CD4-positive, alpha-beta T cell (primary cell): ENCODE measurements at regions of chr10 and their contacts with region 1.

Region 1: GRCh38 chr10:98134431-98135221 is at the start of gene R3HCC1L:
- DNase-seq: peak; percentile 84 to 96 (median 92)
- ATAC-seq: peak; percentile 94
- H3K4me3 ChIP-seq: peak within 1 kb of the TSS; percentile 96
- H3K4me3 Mint-ChIP-seq: peak within 1 kb of the TSS; percentile 86
- H3K27ac ChIP-seq: peak within 1 kb of the TSS; percentile 87 to 97
- H3K27ac Mint-ChIP-seq: peak within 1 kb of the TSS; percentile 96
- H3K4me1 ChIP-seq: peaks cover 35% of the 10 kb centered on the region
- H3K4me1 Mint-ChIP-seq: peaks cover 48% of the 10 kb centered on the region
- H3K27me3 ChIP-seq: no peaks in the 10 kb centered on the region
- H3K27me3 Mint-ChIP-seq: no peaks in the 10 kb centered on the region
- CTCF ChIP-seq: no peak
- total RNA-seq, gene R3HCC1L: 12.7 to 13.7 TPM

Region 2: DNA sequence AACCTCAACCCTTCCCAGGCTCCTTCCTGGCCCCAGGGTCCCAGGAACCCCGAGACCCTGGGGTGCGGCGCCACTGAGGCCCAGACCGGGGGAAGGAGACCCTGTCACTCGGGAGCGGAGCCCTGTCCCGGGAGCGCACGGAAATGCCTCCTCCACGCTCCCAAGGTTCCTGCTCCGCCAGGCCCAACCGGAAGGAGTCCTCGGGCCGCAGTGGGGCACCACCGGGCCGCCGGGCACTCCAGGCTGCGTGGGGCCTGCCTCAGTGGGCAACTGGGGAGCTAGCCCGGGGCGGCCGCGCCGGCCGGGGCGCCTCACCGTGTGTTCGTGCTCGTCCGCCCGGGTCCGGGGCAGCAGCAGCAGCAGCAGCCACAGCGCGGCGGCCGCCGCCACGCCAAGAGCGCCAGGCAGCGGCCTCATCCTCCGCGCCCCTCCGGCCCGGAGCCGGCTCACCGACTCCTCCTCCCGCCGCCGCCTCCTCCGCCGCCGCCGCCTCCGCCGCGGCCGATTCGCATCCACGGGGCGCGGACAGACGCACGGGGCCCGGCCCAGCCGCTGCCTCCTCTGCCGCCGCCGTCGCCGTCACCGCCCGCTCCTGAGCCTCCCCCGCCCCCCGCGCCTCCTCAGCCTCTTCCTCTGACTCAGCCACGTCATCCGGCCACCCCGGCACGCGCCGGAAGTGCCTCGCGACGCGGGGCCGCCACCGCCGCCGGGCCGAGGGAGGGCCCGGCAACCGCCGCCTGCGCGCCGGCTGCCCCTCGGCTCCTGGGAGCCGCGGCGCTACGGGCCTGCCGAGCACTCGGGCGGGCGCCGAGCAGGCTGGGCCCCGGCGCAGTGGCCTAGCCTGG is 1548.0 kb before region 1 on chr10 and contains the start of gene TM9SF3:
- CTCF ChIA-PET with region 1: no interaction called
- POLR2A ChIA-PET with region 1: no interaction called
- intact Hi-C with region 1: loop called in 1 of 2 experiments (anchors 10 kb)
- DNase-seq: peak; percentile 85 to 97 (median 92)
- ATAC-seq: peak; percentile 81
- H3K4me3 ChIP-seq: peak within 1 kb of the TSS; percentile 95
- H3K4me3 Mint-ChIP-seq: peak within 1 kb of the TSS; percentile 95
- H3K27ac ChIP-seq: peak within 1 kb of the TSS; percentile 96 to 98
- H3K27ac Mint-ChIP-seq: no peak within 1 kb of the TSS
- H3K4me1 ChIP-seq: peaks cover 34% of the 10 kb centered on the region
- H3K4me1 Mint-ChIP-seq: peaks cover 44% of the 10 kb centered on the region
- H3K27me3 ChIP-seq: no peaks in the 10 kb centered on the region
- H3K27me3 Mint-ChIP-seq: no peaks in the 10 kb centered on the region
- CTCF ChIP-seq: no peak
- total RNA-seq, gene TM9SF3: 92.4 to 92.7 TPM

Region 3: GRCh38 chr10:97292097-97292862 is 842.3 kb before region 1 on chr10 and contains the start of gene ARHGAP19:
- CTCF ChIA-PET with region 1: no interaction called
- POLR2A ChIA-PET with region 1: no interaction called
- intact Hi-C with region 1: loop called in 1 of 2 experiments (anchors 10 kb)
- DNase-seq: peak; percentile 86 to 97 (median 90)
- ATAC-seq: peak; percentile 99
- H3K4me3 ChIP-seq: peak within 1 kb of the TSS; percentile 72
- H3K4me3 Mint-ChIP-seq: peak within 1 kb of the TSS; percentile 95
- H3K27ac ChIP-seq: peak within 1 kb of the TSS; percentile 49 to 65
- H3K27ac Mint-ChIP-seq: peak within 1 kb of the TSS; percentile 50
- H3K4me1 ChIP-seq: peaks cover 13% of the 10 kb centered on the region
- H3K4me1 Mint-ChIP-seq: peaks cover 18% of the 10 kb centered on the region
- H3K27me3 ChIP-seq: no peaks in the 10 kb centered on the region
- H3K27me3 Mint-ChIP-seq: no peaks in the 10 kb centered on the region
- CTCF ChIP-seq: no peak
- total RNA-seq, gene ARHGAP19: 6.9 to 8.8 TPM

Region 4: GRCh38 chr10:97640174-97640867 is 494.3 kb before region 1 on chr10 and contains the start of gene PI4K2A:
- CTCF ChIA-PET with region 1: no interaction called
- POLR2A ChIA-PET with region 1: no interaction called
- intact Hi-C with region 1: loop called in 1 of 2 experiments (anchors 5 kb)
- DNase-seq: peak; percentile 96 to 100 (median 98)
- ATAC-seq: peak; percentile 97
- H3K4me3 ChIP-seq: peak within 1 kb of the TSS; percentile 65
- H3K4me3 Mint-ChIP-seq: peak within 1 kb of the TSS; percentile 98
- H3K27ac ChIP-seq: no peak within 1 kb of the TSS
- H3K27ac Mint-ChIP-seq: peak within 1 kb of the TSS; percentile 88
- H3K4me1 ChIP-seq: peaks cover 15% of the 10 kb centered on the region
- H3K4me1 Mint-ChIP-seq: peaks cover 26% of the 10 kb centered on the region
- H3K27me3 ChIP-seq: no peaks in the 10 kb centered on the region
- H3K27me3 Mint-ChIP-seq: no peaks in the 10 kb centered on the region
- CTCF ChIP-seq: no peak
- total RNA-seq, gene PI4K2A: 26.3 to 27.2 TPM

Region 5: DNA sequence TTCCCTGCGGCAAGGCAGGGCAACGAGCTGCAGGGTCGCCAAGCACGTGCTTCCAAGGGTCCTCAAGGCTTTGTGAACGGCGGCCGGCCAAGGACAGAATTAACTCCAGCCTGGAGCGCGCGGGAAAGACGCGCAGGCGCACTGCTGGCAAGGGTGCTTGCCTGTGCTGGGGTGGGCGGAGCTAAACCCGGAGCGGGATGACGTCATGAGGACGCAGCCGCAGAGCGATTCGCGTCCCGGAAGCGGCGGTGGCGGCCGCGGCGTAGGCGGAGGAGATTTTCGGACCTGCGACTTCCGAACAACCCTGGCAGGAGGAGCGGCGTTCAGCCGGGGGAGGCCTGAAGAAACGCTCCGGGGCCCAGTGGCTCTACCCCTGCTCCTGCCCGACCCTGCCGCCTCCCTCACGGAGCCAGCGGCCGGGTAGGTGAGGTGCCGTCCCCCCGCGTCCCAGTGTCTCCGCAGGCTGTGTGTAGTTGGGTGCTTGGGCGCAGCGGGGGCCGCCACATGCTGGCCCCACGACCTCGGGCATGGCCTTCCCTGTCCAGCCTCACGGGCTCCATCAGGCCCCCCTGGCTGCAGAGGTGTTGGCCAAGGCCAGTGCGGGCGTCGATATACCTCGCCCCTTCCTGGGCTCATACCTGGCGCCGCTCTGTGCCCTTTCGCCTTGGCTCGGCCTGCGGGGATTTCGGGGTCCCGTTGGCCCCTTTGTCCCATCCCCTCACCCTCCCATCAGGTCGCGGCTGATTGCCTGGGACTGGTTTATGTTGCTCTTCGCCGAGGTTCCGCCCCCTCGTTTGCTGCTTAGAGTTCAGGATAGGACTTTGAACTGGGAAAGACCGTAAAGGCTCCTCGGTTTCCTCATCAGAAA is 397.5 kb before region 1 on chr10 and contains the start of gene ZFYVE27:
- CTCF ChIA-PET with region 1: no interaction called
- POLR2A ChIA-PET with region 1: interaction called, 7 read pairs
- intact Hi-C with region 1: loop called in 1 of 2 experiments (anchors 2 kb)
- DNase-seq: peak; percentile 91 to 98 (median 94)
- ATAC-seq: peak; percentile 90
- H3K4me3 ChIP-seq: peak within 1 kb of the TSS; percentile 80
- H3K4me3 Mint-ChIP-seq: peak within 1 kb of the TSS; percentile 97
- H3K27ac ChIP-seq: peak within 1 kb of the TSS; percentile 85 to 92
- H3K27ac Mint-ChIP-seq: peak within 1 kb of the TSS; percentile 92
- H3K4me1 ChIP-seq: peaks cover 37% of the 10 kb centered on the region
- H3K4me1 Mint-ChIP-seq: peaks cover 57% of the 10 kb centered on the region
- H3K27me3 ChIP-seq: no peaks in the 10 kb centered on the region
- H3K27me3 Mint-ChIP-seq: no peaks in the 10 kb centered on the region
- CTCF ChIP-seq: no peak
- total RNA-seq, gene ZFYVE27: 58.4 to 60.6 TPM

Region 6: DNA sequence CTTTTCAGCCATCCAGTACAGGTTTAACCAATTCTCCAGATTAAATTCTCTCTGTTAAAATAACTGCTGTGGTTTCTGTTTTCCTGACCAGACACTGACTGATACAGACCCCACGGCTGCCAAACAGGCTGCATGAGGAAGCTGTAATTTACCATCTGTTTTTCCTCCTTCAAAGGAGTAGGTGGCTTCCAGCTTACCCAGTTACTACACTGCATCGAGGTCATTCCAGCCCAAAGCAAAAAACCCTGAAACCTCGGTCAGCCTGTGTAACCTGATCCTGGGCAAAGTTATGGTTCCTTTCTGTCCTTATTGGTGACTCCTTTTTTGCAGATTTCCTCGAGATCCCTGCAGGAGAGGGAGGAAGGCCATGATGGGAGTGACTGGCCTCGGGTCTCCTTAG is 161.3 kb after region 1 on chr10:
- CTCF ChIA-PET with region 1: no interaction called
- POLR2A ChIA-PET with region 1: no interaction called
- intact Hi-C with region 1: no loop called
- DNase-seq: no peak
- ATAC-seq: no peak
- H3K4me3 ChIP-seq: no peak overlapping the region
- H3K4me3 Mint-ChIP-seq: no peak overlapping the region
- H3K27ac ChIP-seq: no peak overlapping the region
- H3K27ac Mint-ChIP-seq: no peak overlapping the region
- H3K4me1 ChIP-seq: no peaks in the 10 kb centered on the region
- H3K4me1 Mint-ChIP-seq: no peaks in the 10 kb centered on the region
- H3K27me3 ChIP-seq: peaks cover under 1 to 16% of the 10 kb centered on the region in 2 experiments
- H3K27me3 Mint-ChIP-seq: peaks cover 52% of the 10 kb centered on the region
- CTCF ChIP-seq: no peak

Region 7: GRCh38 chr10:98349508-98349922 is 214.9 kb after region 1 on chr10:
- CTCF ChIA-PET with region 1: no interaction called
- POLR2A ChIA-PET with region 1: no interaction called
- intact Hi-C with region 1: no loop called
- DNase-seq: no peak
- ATAC-seq: no peak
- H3K4me3 ChIP-seq: no peak overlapping the region
- H3K4me3 Mint-ChIP-seq: no peak overlapping the region
- H3K27ac ChIP-seq: no peak overlapping the region
- H3K27ac Mint-ChIP-seq: no peak overlapping the region
- H3K4me1 ChIP-seq: no peaks in the 10 kb centered on the region
- H3K4me1 Mint-ChIP-seq: no peaks in the 10 kb centered on the region
- H3K27me3 ChIP-seq: peaks cover 10 to 18% of the 10 kb centered on the region in 2 experiments
- H3K27me3 Mint-ChIP-seq: peaks cover 71% of the 10 kb centered on the region
- CTCF ChIP-seq: no peak

Region 8: GRCh38 chr10:99430451-99431189 is 1296.0 kb after region 1 on chr10 and contains the start of gene GOT1:
- CTCF ChIA-PET with region 1: no interaction called
- POLR2A ChIA-PET with region 1: interaction called, 8 read pairs
- intact Hi-C with region 1: loop called (anchors 5 to 10 kb)
- DNase-seq: peak; percentile 79 to 98 (median 87)
- ATAC-seq: peak; percentile 93
- H3K4me3 ChIP-seq: peak within 1 kb of the TSS; percentile 93
- H3K4me3 Mint-ChIP-seq: peak within 1 kb of the TSS; percentile 91
- H3K27ac ChIP-seq: peak within 1 kb of the TSS; percentile 52 to 67
- H3K27ac Mint-ChIP-seq: peak within 1 kb of the TSS; percentile 95
- H3K4me1 ChIP-seq: peaks cover 17% of the 10 kb centered on the region
- H3K4me1 Mint-ChIP-seq: peaks cover 47% of the 10 kb centered on the region
- H3K27me3 ChIP-seq: no peaks in the 10 kb centered on the region
- H3K27me3 Mint-ChIP-seq: no peaks in the 10 kb centered on the region
- CTCF ChIP-seq: no peak
- total RNA-seq, gene GOT1: 3.5 to 5.7 TPM

Region 9: GRCh38 chr10:99732033-99732912 is 1597.6 kb after region 1 on chr10 and contains the starts of genes COX15 and CUTC:
- CTCF ChIA-PET with region 1: no interaction called
- POLR2A ChIA-PET with region 1: interaction called, 8 read pairs
- intact Hi-C with region 1: loop called in 1 of 2 experiments (anchors 5 kb)
- DNase-seq: peak; percentile 89 to 98 (median 93)
- ATAC-seq: peak; percentile 89
- H3K4me3 ChIP-seq: peak within 1 kb of the TSS; percentile 82
- H3K4me3 Mint-ChIP-seq: peak within 1 kb of the TSS; percentile 98
- H3K27ac ChIP-seq: peak within 1 kb of the TSS; percentile 86 to 87
- H3K27ac Mint-ChIP-seq: peak within 1 kb of the TSS; percentile 91
- H3K4me1 ChIP-seq: peaks cover 26% of the 10 kb centered on the region
- H3K4me1 Mint-ChIP-seq: peaks cover 48% of the 10 kb centered on the region
- H3K27me3 ChIP-seq: no peaks in the 10 kb centered on the region
- H3K27me3 Mint-ChIP-seq: no peaks in the 10 kb centered on the region
- CTCF ChIP-seq: peak; percentile 6
- total RNA-seq, gene COX15: 7.7 to 7.9 TPM
- total RNA-seq, gene CUTC: 14.1 to 16.0 TPM